ENCODE measurements at regions of chr22 and their contacts with region 1.

Region 1: DNA sequence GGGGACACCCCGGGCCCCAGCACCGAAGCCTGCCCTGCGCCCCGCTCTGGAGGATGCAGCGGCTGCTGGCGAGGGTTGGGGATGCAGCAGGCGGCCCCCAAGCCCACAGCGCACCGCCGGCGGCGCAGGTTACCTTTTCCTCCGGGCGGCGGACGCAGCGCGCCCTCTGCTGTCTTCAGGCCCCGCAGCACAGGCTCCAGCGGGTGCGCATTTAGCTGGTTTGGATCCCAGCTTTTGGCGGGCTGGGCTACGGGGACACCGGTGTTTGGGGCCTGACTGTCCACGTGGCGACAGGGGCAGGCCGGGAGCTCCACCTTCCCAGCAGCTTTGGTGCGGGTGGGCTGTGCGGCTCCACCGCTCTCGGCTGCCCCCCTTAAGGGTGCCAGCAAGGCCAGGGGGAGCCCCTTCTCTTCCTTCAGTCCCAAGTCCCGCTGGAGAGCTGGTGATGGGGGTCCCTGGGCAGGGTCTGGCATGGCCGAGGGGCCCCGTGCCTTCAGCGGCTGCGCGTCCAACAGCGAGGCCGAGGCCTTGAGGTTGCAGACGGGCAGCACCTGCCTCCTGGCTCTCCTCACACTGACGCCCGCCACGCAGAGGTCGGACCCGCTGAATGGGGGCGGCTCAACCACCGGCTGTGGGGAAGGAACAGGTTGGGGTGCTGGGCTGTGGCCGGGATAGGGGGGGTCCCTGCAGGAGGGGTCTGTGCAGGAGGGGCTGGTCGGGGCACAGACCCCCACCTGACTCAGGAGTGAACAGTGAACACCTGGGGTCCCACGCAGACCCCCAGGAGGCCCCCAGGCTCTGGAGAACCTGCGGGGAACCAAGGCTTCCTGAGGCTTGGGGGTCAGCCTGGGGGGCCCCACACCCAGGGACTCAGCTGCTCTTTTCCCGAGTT is 18.0 kb upstream of the IL17REL start:
- DNase-seq: peak; percentile 79 to 87
- H3K4me3 ChIP-seq: peak overlapping the region; percentile 25; the same call in 1 of the 2 replicates
- H3K4me3 Mint-ChIP-seq: peak overlapping the region; percentile 31
- H3K27ac Mint-ChIP-seq: no peak overlapping the region
- H3K4me1 ChIP-seq: peaks cover 3% of the 10 kb centered on the region; the same call in 1 of the 2 replicates
- H3K4me1 Mint-ChIP-seq: no peaks in the 10 kb centered on the region
- H3K27me3 ChIP-seq: no peaks in the 10 kb centered on the region
- H3K27me3 Mint-ChIP-seq: no peaks in the 10 kb centered on the region
- CTCF ChIP-seq: peak; percentile 89 to 91

Region 2: GRCh38 chr22:49767355-49768062 is 263.0 kb before region 1 on chr22:
- CTCF ChIA-PET with region 1: interaction called, 4 read pairs
- POLR2A ChIA-PET with region 1: no interaction called
- intact Hi-C with region 1: loop called (anchors 5 kb)
- DNase-seq: peak; percentile 39 to 53
- H3K4me3 ChIP-seq: no peak overlapping the region
- H3K4me3 Mint-ChIP-seq: no peak overlapping the region
- H3K27ac Mint-ChIP-seq: no peak overlapping the region
- H3K4me1 ChIP-seq: no peaks in the 10 kb centered on the region
- H3K4me1 Mint-ChIP-seq: no peaks in the 10 kb centered on the region
- H3K27me3 ChIP-seq: no peaks in the 10 kb centered on the region
- H3K27me3 Mint-ChIP-seq: no peaks in the 10 kb centered on the region
- CTCF ChIP-seq: peak; percentile 56 to 60

Region 3: GRCh38 chr22:49930739-49931412 is 99.7 kb before region 1 on chr22:
- CTCF ChIA-PET with region 1: interaction called, 45 read pairs
- POLR2A ChIA-PET with region 1: no interaction called
- intact Hi-C with region 1: loop called (anchors 1 kb)
- DNase-seq: peak; percentile 75 to 76
- H3K4me3 ChIP-seq: no peak overlapping the region
- H3K4me3 Mint-ChIP-seq: no peak overlapping the region
- H3K27ac Mint-ChIP-seq: no peak overlapping the region
- H3K4me1 ChIP-seq: no peaks in the 10 kb centered on the region; the same call in none of the 2 replicates
- H3K4me1 Mint-ChIP-seq: no peaks in the 10 kb centered on the region
- H3K27me3 ChIP-seq: no peaks in the 10 kb centered on the region
- H3K27me3 Mint-ChIP-seq: no peaks in the 10 kb centered on the region
- CTCF ChIP-seq: peak; percentile 69 to 73

Region 4: GRCh38 chr22:49951000-49951677 is 79.4 kb before region 1 on chr22:
- CTCF ChIA-PET with region 1: interaction called, 14 read pairs
- POLR2A ChIA-PET with region 1: no interaction called
- intact Hi-C with region 1: no loop called
- DNase-seq: peak; percentile 89 to 91
- H3K4me3 ChIP-seq: no peak overlapping the region
- H3K4me3 Mint-ChIP-seq: peak overlapping the region; percentile 75
- H3K27ac Mint-ChIP-seq: peak overlapping the region; percentile 99
- H3K4me1 ChIP-seq: peaks cover 82% of the 10 kb centered on the region
- H3K4me1 Mint-ChIP-seq: peaks cover 8% of the 10 kb centered on the region
- H3K27me3 ChIP-seq: no peaks in the 10 kb centered on the region
- H3K27me3 Mint-ChIP-seq: no peaks in the 10 kb centered on the region
- CTCF ChIP-seq: no peak

Region 5: DNA sequence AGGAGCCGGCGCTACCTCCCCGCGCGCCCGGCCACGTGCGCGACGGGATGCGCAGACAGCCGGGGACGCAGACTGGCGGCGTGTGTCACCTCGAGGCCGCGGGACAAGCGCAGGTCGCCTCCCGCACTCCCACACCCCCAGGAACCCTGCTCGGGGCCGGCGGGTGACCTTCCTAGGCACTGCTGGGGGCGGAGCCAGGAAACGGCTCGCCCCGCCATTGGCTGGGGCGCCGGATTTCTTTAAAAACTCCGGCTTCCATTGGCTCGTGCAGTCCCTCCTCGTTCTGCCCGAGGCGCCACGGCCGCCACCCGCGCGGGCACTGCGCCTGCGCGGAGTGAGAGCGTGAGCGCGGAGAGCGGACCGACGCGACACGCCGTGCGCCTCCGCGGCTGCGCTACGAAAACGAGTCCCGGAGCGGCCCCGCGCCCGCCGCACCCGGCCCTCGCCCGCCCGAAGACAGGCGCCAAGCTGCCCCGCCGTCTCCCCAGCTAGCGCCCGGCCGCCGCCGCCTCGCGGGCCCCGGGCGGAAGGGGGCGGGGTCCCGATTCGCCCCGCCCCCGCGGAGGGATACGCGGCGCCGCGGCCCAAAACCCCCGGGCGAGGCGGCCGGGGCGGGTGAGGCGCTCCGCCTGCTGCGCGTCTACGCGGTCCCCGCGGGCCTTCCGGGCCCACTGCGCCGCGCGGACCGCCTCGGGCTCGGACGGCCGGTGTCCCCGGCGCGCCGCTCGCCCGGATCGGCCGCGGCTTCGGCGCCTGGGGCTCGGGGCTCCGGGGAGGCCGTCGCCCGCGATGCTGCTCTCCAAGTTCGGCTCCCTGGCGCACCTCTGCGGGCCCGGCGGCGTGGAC is 70.2 kb before region 1 on chr22 and contains the start of gene PIM3:
- CTCF ChIA-PET with region 1: interaction called, 13 read pairs
- POLR2A ChIA-PET with region 1: interaction called, 12 read pairs
- intact Hi-C with region 1: no loop called
- DNase-seq: peak; percentile 95 to 96
- H3K4me3 ChIP-seq: peak within 1 kb of the TSS; percentile 80
- H3K4me3 Mint-ChIP-seq: peak within 1 kb of the TSS; percentile 82
- H3K27ac Mint-ChIP-seq: peak within 1 kb of the TSS; percentile 92
- H3K4me1 ChIP-seq: peaks cover 46% of the 10 kb centered on the region
- H3K4me1 Mint-ChIP-seq: peaks cover 7% of the 10 kb centered on the region
- H3K27me3 ChIP-seq: no peaks in the 10 kb centered on the region
- H3K27me3 Mint-ChIP-seq: no peaks in the 10 kb centered on the region
- CTCF ChIP-seq: no peak
- total RNA-seq, gene PIM3: 39.6 and 41.1 TPM in 2 replicates

Region 6: DNA sequence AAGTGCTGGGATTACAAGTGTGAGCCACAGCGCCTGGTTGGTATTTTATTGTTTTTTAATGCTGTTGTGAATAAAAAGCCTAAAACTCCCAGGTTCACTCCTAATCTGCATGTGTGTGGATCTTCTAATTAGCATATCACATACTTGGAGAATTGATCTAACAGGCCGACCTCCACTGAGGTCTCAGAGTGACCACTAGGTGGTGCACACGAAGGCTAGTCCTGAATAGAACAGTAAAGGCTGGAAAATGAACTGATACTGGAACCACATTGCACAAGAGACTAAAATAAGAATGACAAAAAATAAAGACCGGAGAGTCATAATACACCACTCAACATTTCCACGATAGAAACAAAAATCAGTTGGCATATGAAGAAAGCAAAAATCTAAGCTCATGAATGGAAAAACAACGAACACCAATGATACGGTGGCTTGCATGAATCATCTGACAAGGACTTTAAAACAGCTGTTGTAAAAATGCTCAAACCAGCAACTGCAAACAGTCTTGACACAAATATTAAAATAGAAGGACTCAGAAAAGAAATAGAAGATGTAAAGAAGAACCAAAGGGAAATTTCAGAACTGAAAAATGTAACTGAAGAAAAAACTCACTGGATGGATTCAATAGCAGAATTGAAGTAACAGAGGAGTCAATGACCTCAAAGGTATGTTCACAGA is 50.8 kb before region 1 on chr22:
- CTCF ChIA-PET with region 1: interaction called, 11 read pairs
- POLR2A ChIA-PET with region 1: no interaction called
- intact Hi-C with region 1: loop called (anchors 10 kb)
- DNase-seq: peak; percentile 36 to 49
- H3K4me3 ChIP-seq: no peak overlapping the region
- H3K4me3 Mint-ChIP-seq: no peak overlapping the region
- H3K27ac Mint-ChIP-seq: no peak overlapping the region
- H3K4me1 ChIP-seq: no peaks in the 10 kb centered on the region
- H3K4me1 Mint-ChIP-seq: no peaks in the 10 kb centered on the region
- H3K27me3 ChIP-seq: no peaks in the 10 kb centered on the region
- H3K27me3 Mint-ChIP-seq: no peaks in the 10 kb centered on the region
- CTCF ChIP-seq: peak; percentile 32 to 40

Region 7: GRCh38 chr22:50074551-50075530 is 44.3 kb after region 1 on chr22:
- CTCF ChIA-PET with region 1: no interaction called
- POLR2A ChIA-PET with region 1: no interaction called
- intact Hi-C with region 1: no loop called
- DNase-seq: no peak
- H3K4me3 ChIP-seq: no peak overlapping the region
- H3K4me3 Mint-ChIP-seq: no peak overlapping the region
- H3K27ac Mint-ChIP-seq: no peak overlapping the region
- H3K4me1 ChIP-seq: no peaks in the 10 kb centered on the region
- H3K4me1 Mint-ChIP-seq: no peaks in the 10 kb centered on the region
- H3K27me3 ChIP-seq: no peaks in the 10 kb centered on the region
- H3K27me3 Mint-ChIP-seq: no peaks in the 10 kb centered on the region
- CTCF ChIP-seq: no peak

Measured in Caco-2 (cell line).